Mammary epithelial cell (primary cell): ENCODE measurements at regions of chr12 and their contacts with region 1.

Region 1: GRCh38 chr12:120265473-120266179 is at the start of gene PXN:
- DNase-seq: peak; percentile 63
- H3K4me3 ChIP-seq: peak within 1 kb of the TSS; percentile 58 to 85 (median 66)
- H3K27ac ChIP-seq: peak within 1 kb of the TSS; percentile 89
- H3K4me1 ChIP-seq: peaks cover 27% of the 10 kb centered on the region
- H3K27me3 ChIP-seq: no peaks in the 10 kb centered on the region
- CTCF ChIP-seq: peak; percentile 45 to 75
- total RNA-seq, gene PXN: 155 to 477 TPM

Region 2: DNA sequence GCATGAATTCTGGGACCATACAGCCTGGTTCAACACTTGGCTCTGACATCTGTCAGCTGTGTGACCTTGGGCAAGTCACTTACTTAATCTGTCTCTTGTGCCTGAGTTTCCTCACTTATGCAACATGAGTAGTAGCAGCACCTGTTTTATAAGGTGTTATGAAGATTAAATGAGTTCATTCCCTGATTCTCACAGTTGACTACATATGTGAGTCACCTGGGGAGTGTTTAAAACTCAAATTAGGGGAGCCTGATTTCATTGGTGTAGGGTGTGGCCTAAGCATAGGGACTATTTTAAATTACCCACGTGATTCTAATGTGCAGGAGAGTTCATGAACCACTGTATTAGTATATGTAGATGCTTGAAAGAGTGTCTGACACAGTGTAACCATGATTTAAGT is 708.8 kb before region 1 on chr12:
- CTCF ChIA-PET with region 1: no interaction called
- dilution Hi-C with region 1: no loop called
- in situ Hi-C with region 1: no loop called
- intact Hi-C with region 1: no loop called
- DNase-seq: no peak
- H3K4me3 ChIP-seq: no peak overlapping the region
- H3K27ac ChIP-seq: no peak overlapping the region
- H3K4me1 ChIP-seq: no peaks in the 10 kb centered on the region
- H3K27me3 ChIP-seq: no peaks in the 10 kb centered on the region
- CTCF ChIP-seq: no peak

Region 3: DNA sequence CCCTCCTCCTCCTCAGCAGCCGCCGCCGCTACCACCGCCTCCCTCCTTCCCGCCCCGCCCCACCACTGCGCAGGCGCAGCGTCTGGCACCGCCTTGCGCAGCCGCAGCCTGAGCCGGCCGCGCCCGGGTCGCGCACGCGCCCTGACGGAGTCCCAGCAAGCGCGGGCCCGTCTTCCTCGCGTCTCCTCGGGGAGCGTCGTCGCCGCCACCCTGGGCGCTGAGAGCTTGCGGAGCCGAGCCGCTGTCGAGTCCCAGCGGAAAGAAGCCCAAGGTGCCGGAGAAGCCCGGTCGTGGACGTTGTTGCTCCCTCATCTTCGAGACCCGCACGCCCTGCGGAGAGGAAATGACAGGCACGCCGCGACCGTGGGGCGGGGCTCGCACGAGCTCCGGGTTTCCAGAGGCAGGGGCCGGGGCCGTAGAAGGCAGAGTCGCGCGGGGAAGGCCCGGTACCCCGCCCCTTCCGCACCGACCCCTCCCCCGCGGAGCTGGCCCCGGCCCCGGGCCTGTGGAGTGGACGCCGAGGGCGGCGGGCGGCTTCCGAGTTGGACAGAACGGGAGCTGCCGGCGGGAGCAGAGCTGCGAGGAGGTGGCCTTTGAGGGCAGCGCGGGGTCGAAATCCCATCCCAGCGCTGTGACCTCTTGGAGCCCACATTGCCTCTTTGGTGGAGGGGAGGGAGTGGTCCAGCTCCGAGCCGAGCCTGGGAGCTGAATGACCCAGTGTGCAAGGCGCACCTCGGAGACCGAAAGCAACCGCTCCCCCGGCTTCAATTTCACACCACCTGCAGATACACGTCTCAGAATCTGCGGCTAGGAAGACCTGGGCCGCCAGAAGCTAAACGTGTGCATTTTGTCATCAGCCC is 148.6 kb before region 1 on chr12:
- CTCF ChIA-PET with region 1: interaction called, 4 read pairs
- dilution Hi-C with region 1: loop called (anchors 10 kb)
- in situ Hi-C with region 1: no loop called
- intact Hi-C with region 1: no loop called
- DNase-seq: peak; percentile 91
- H3K4me3 ChIP-seq: peak overlapping the region; percentile 61 to 97 (median 95)
- H3K27ac ChIP-seq: peak overlapping the region; percentile 76
- H3K4me1 ChIP-seq: peaks cover 25% of the 10 kb centered on the region
- H3K27me3 ChIP-seq: no peaks in the 10 kb centered on the region
- CTCF ChIP-seq: no peak

Region 4: DNA sequence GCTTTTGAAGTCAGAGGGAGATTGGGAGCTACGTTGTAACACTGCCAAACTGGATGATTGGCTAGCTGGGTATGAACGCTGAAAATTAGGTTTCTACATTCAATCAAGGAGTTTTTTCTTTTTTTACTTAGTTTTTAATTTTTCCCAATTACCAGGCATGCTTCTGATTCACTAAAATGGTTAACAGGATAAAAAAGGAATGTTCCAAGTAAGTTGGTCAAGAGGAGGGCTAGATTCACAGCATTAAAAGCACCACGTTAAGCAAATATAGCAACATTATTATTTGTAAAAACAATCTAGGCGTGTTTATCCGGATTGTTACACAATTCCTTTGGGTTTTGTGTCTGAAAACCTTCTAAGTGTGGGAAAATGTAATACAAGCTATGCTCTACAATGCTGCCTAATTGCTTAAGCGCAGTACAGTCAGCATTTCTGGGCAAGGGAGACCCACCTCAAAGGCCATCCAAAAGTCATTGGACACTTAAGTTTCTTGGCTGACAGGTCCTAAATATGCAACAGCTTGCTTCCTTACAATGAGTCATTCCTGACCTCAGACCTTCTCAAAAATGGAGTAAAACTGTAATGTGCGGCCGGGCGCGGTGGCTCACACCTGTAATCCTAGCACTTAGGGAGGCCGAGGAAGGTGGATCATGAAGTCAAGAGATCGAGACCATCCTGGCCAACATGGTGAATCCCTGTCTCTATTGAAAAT is 65.9 kb before region 1 on chr12:
- CTCF ChIA-PET with region 1: interaction called, 10 read pairs
- dilution Hi-C with region 1: loop called (anchors 10 kb)
- in situ Hi-C with region 1: no loop called
- intact Hi-C with region 1: loop called (anchors 1 kb)
- DNase-seq: peak; percentile 58
- H3K4me3 ChIP-seq: peak overlapping the region; percentile 65 to 100 (median 94)
- H3K27ac ChIP-seq: peak overlapping the region; percentile 86
- H3K4me1 ChIP-seq: peaks cover 47% of the 10 kb centered on the region
- H3K27me3 ChIP-seq: no peaks in the 10 kb centered on the region
- CTCF ChIP-seq: no peak

Region 5: DNA sequence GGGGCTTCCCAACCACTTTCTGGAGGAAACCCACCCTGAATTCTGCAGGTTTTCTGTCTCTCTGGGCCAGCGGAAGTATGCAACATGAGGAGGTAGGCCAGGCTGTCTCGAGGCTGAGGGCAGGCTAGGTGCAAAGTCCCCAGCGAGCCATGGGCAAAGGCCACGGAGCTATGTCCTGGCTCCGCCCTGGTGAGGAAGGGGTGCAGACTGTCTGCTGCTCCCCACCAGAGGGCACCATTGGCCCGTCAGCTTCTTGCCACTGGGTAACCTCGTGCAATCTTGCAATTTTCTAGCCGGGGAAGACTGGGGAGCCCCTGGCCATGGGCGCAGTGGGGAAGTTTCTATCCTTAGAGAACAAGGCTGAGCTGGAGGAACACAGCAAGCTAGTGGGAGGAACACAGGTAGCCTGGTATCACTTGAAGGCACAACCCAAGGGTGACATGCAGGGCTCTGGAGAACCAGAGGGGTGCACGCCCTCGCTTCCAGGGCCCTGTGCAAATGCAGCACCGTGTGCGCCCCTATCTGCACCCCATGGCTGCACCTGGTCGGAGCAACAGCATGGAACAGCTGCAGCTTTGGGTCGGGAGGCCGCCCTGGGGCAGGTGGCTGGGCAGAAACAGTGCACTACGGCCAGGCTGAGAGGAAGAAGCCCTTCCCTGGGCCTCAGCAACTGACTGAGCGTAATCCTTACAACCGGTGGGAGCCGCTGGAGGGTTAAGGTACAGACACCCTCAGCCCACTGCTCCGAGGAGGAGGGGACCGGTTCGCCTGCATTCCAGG is 37.1 kb before region 1 on chr12:
- CTCF ChIA-PET with region 1: interaction called, 14 read pairs
- dilution Hi-C with region 1: loop called (anchors 5 kb)
- in situ Hi-C with region 1: loop called (anchors 5 kb)
- intact Hi-C with region 1: loop called (anchors 1 kb)
- DNase-seq: peak; percentile 61
- H3K4me3 ChIP-seq: peak overlapping the region in 2 of 3 experiments; percentile 6 to 19
- H3K27ac ChIP-seq: peak overlapping the region; percentile 95
- H3K4me1 ChIP-seq: peaks cover 92% of the 10 kb centered on the region
- H3K27me3 ChIP-seq: no peaks in the 10 kb centered on the region
- CTCF ChIP-seq: peak; percentile 77 to 91

Region 6: GRCh38 chr12:120247621-120248030 is 18.0 kb before region 1 on chr12:
- CTCF ChIA-PET with region 1: no interaction called
- dilution Hi-C with region 1: no loop called
- in situ Hi-C with region 1: no loop called
- intact Hi-C with region 1: loop called (anchors 1 kb)
- DNase-seq: peak; percentile 73
- H3K4me3 ChIP-seq: peak overlapping the region; percentile 8 to 33 (median 9)
- H3K27ac ChIP-seq: peak overlapping the region; percentile 90
- H3K4me1 ChIP-seq: peaks cover 80% of the 10 kb centered on the region
- H3K27me3 ChIP-seq: no peaks in the 10 kb centered on the region
- CTCF ChIP-seq: no peak

Region 7: DNA sequence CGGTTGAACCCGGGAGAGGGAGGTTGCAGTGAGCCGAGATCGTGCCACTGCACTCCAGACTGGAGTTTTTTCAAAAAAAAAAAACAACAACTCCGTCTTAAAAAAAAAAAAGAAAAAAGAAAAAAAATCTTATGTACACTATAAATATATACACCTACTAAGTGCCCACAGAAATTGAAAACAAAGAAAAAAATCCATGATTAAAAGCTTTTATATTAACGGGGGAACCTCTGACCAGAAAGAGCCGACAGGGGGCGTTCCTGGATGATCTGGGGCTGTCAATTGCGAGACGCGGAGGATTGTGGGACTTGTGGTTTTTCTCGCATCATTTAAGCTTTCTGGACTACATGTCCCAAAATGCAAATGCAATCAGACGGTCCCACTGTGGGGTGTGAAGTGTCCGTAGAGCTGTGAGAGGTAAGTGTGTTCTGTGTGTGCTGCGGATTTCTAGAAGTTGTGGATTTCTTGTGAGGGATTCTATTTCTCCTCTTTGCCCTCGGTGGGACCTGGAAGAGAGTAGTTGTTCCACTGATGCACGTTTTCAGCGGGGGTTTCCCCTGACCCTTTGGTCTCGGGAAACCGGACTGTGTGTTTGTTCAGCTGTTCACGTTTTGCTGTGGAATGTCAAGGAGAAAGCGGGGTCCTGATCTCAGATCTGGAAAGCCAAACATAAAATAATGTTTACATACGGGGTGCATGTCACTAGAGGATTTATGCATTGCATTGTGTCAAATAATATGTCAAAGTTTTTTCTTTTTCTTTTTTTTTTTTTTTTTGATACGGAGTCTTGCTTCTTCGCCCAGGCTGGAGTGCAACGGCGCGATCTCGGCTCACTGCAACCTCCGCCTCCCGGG is 36.6 kb after region 1 on chr12 and contains the start of gene SIRT4:
- CTCF ChIA-PET with region 1: no interaction called
- dilution Hi-C with region 1: loop called (anchors 5 kb)
- in situ Hi-C with region 1: no loop called
- intact Hi-C with region 1: no loop called
- DNase-seq: peak; percentile 90
- H3K4me3 ChIP-seq: peak within 1 kb of the TSS; percentile 57 to 77 (median 63)
- H3K27ac ChIP-seq: peak within 1 kb of the TSS; percentile 41
- H3K4me1 ChIP-seq: no peaks in the 10 kb centered on the region
- H3K27me3 ChIP-seq: no peaks in the 10 kb centered on the region
- CTCF ChIP-seq: peak; percentile 79 to 84
- total RNA-seq, gene SIRT4: 0.42 to 0.83 TPM

Region 8: DNA sequence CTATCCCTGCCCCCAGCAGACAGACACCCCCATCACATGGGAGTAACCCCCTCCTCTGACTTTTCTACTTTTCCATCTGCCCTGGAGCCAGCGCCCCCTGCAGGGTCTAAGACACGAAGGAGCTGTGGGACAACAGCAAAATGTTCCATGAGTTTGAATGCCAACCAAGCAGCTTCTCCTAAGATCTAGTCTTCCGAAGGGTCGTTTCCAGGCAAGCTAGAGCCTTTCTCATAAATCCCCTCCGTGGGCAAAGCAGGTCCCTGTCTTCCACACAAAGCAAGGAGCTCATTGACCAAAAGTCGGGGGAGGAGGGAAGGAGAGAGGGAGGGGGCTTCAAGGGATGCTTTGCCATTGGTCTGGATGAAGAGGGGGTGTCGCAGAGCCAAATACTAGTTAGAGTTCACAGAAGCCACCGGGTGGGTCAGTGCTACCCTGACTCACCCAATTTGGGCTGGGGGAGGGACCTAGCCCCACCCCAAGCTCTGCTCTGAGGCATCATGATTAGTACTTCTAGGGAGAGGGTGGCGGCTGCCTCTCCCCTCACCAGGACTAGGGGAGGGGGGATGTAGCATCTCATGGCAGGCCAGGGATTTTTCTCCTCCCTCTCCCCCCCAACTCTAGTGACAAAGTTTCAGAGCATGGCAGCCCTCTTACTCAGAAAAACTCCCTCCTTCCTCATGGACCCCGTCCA is 101.8 kb after region 1 on chr12:
- CTCF ChIA-PET with region 1: no interaction called
- dilution Hi-C with region 1: no loop called
- in situ Hi-C with region 1: no loop called
- intact Hi-C with region 1: no loop called
- DNase-seq: no peak
- H3K4me3 ChIP-seq: no peak overlapping the region
- H3K27ac ChIP-seq: no peak overlapping the region
- H3K4me1 ChIP-seq: no peaks in the 10 kb centered on the region
- H3K27me3 ChIP-seq: peaks cover 33% of the 10 kb centered on the region
- CTCF ChIP-seq: peak; percentile 11 to 28